Sigmoid colon (tissue), 7 donors: ENCODE measurements at regions of chr1 and their contacts with region 1.

Region 1: GRCh38 chr1:205485338-205486228 is 18.9 kb upstream of the CDK18 start:
- DNase-seq: peak; percentile 75
- H3K4me3 ChIP-seq: no peak overlapping the region
- H3K27ac ChIP-seq: no peak overlapping the region
- H3K4me1 ChIP-seq: no peaks in the 10 kb centered on the region
- H3K27me3 ChIP-seq: peaks cover 0 to 41% (median 5%) of the 10 kb centered on the region in 3 donors
- CTCF ChIP-seq: peak; percentile 72 to 95 (median 88)
- EP300 ChIP-seq: no peak
- POLR2A ChIP-seq: no peak

Region 2: DNA sequence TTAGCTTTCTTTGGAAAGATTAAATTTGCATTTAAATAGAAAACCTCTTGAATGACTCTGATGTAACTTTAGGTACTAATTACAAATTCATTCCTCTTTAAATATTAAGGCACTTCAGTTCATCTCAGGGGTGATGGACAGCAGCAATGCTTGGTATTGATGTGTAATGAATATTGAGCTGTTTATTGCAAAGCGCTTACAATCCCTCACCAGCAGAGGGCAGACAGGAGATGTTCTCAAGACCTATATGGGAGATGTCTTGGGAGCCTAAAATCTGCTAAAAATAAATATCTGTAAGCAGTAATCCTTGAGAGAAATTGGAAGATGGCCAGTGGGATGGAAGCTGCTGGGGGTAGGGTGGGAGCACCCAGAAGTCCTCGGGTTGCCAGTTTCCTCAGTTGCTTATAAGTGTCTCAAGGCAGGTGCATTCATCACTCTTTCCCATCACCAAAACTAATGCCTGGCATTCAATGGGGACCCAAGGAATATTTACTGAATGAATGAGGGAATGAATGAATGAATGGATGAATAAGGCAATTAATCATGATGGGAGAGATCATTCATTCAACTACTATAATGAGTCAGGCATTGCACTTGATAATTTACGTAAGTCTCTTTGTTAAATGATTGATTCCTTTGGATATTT is 131.2 kb before region 1 on chr1:
- intact Hi-C with region 1: loop called (anchors 1 kb)
- DNase-seq: peak; percentile 72
- H3K4me3 ChIP-seq: no peak overlapping the region
- H3K27ac ChIP-seq: no peak overlapping the region
- H3K4me1 ChIP-seq: peaks cover 0 to 12% (median 9%) of the 10 kb centered on the region in 4 donors
- H3K27me3 ChIP-seq: peaks cover 0 to 15% (median 11%) of the 10 kb centered on the region in 3 donors
- CTCF ChIP-seq: peak; percentile 25 to 88 (median 75)
- EP300 ChIP-seq: no peak
- POLR2A ChIP-seq: no peak

Region 3: GRCh38 chr1:205396967-205397616 is 88.5 kb before region 1 on chr1:
- intact Hi-C with region 1: loop called (anchors 1 kb)
- DNase-seq: no peak
- H3K4me3 ChIP-seq: no peak overlapping the region
- H3K27ac ChIP-seq: no peak overlapping the region
- H3K4me1 ChIP-seq: no peaks in the 10 kb centered on the region
- H3K27me3 ChIP-seq: no peaks in the 10 kb centered on the region
- CTCF ChIP-seq: peak; percentile 33 to 67 (median 53)
- EP300 ChIP-seq: no peak
- POLR2A ChIP-seq: no peak

Region 4: DNA sequence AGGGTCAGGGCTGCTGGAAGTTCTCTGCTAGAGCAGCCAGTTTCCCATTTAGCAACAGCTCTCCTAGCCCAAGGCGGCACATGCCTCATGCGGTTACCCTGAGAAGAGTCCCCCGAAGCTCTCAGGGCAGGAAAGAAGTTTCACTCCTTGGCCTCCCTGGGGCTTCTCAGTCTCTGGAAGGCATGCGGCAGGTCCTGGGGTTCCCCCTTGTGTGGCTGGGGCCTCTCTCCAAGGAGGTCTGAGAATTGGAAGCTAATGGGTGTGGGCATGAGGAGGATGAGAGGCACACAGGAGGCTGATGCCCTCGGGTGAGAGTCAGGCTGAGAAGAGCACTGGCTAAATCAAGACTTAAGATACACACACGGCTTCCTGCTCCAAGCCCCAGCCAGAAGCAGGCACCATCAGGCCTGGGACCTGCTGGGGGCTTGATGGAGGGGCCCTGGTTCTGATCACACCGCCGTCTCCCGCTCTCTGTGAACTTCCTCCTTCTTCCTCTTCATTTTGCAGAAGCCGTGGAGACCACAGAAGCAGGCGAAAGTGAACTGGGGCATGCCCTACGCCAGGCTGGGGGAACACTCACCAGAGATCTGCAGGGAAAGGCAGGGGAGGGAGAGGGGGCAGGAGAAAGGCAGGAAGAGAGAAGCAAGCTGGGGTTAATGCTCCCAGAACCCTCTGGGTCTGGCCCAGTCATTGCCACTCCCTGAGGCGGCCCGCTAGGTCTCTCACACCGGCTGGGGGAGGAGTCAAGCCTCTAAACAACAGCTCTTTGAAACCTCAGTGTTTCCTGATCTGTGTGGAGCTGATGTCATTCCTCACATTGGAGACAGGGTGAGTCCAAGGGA is 44.9 kb before region 1 on chr1:
- intact Hi-C with region 1: loop called (anchors 5 kb)
- DNase-seq: peak; percentile 73
- H3K4me3 ChIP-seq: no peak overlapping the region
- H3K27ac ChIP-seq: peak overlapping the region in 3 of 4 donors; percentile 5 to 54 (median 27)
- H3K4me1 ChIP-seq: peaks cover 0 to 33% (median 24%) of the 10 kb centered on the region in 4 donors
- H3K27me3 ChIP-seq: peaks cover 0 to 15% (median 0%) of the 10 kb centered on the region in 3 donors
- CTCF ChIP-seq: no peak
- EP300 ChIP-seq: no peak
- POLR2A ChIP-seq: no peak

Region 5: DNA sequence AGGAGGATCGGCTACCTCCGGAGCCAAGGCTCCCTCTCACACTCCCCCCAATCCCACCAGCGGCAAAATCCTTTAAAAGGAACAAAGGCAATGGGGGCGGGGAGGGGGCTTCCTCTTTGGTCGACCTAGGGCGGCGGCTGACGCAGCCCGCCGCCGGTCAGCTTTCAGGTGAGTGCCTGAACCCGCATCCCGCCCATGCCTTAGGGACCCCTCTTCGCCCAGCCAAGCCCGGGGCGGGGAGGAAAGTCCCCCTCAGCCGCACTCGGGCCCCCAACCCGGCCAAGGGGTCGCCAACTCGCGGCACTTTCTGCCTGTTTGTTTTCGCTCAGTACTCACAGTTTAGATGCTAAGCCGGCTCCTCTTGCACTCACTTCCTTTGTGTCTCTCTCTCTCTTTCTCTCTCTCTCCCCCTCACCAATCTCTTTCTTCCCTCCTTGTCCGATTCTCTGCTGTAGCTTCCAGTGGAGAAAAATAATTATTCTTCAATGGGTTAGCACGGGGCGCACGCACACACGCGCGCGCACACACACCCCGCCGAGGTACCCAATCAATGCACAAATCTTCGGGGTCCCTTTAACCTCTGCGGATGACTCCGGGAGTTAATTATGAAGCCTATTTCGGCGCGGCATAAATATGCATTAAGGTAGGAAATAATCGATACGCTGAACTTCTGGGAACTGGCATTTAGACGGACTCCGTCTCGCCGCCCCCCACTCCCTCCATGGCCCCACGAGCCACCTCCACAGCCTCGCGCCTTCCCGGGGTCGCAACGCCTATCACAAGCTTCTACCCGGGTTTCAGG is 29.8 kb before region 1 on chr1 and contains the start of gene BLACAT1:
- intact Hi-C with region 1: no loop called
- DNase-seq: no peak
- H3K4me3 ChIP-seq: peak within 1 kb of the TSS in 2 of 4 donors; percentile 12 to 26
- H3K27ac ChIP-seq: no peak within 1 kb of the TSS
- H3K4me1 ChIP-seq: peaks cover 0 to 22% (median 20%) of the 10 kb centered on the region in 4 donors
- H3K27me3 ChIP-seq: peaks cover 50 to 92% (median 76%) of the 10 kb centered on the region in 3 donors
- CTCF ChIP-seq: no peak
- EP300 ChIP-seq: no peak
- POLR2A ChIP-seq: no peak
- total RNA-seq, gene BLACAT1: 0.36 TPM in 1 of 4 donors, not detected in the others

Region 6: DNA sequence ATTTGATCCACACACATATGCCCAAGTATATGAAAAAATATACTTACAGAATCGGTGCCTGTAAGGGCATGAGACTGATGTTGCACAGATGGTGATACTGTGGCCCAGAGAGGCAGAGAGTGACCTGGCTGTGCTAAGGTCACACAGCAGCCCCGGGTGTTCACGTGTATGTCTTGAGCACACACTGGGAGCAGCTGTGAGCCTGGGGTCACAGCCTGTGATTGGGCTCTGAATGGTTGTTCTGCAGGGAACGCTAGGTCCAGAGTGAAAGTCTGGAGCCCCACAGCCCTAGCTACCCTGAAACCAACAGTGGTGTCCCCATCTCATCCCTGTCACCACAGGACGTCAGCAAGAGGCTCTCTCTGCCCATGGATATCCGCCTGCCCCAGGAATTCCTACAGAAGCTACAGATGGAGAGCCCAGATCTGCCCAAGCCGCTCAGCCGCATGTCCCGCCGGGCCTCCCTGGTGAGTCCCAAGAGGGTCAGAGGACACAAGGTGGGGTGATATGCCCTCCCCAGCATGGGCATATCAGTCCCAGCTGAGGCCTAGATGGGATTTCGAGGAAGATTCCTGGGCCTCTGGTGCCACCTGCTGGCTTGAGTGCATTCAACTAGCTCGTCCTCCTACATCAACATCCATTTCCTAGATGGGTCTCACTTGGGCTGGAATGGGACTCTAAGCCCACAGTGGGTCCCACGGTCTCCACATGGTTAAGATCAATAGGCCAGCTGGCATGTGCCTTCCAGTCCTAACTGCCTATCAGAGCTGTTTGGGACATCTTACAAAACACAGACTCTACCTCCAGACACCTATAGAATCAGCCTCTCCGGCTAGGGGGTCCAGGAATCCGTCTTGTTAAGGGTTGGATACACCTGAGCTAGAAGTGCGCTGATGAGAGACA is 38.6 kb after region 1 on chr1:
- intact Hi-C with region 1: loop called (anchors 1 kb)
- DNase-seq: peak; percentile 86
- H3K4me3 ChIP-seq: no peak overlapping the region
- H3K27ac ChIP-seq: no peak overlapping the region
- H3K4me1 ChIP-seq: peaks cover 3 to 35% (median 20%) of the 10 kb centered on the region in 4 donors
- H3K27me3 ChIP-seq: no peaks in the 10 kb centered on the region
- CTCF ChIP-seq: peak; percentile 73 to 88 (median 76)
- EP300 ChIP-seq: no peak
- POLR2A ChIP-seq: no peak

Region 7: GRCh38 chr1:205858141-205858961 is 372.8 kb after region 1 on chr1:
- intact Hi-C with region 1: no loop called
- DNase-seq: no peak
- H3K4me3 ChIP-seq: no peak overlapping the region
- H3K27ac ChIP-seq: no peak overlapping the region
- H3K4me1 ChIP-seq: no peaks in the 10 kb centered on the region
- H3K27me3 ChIP-seq: no peaks in the 10 kb centered on the region
- CTCF ChIP-seq: no peak
- EP300 ChIP-seq: no peak
- POLR2A ChIP-seq: no peak